Activated CD8-positive, alpha-beta T cell treated with anti-CD3 and anti-CD28 coated beads for 36 hours (primary cell): ENCODE measurements at regions of chr4 and their contacts with region 1.

Region 1: GRCh38 chr4:182770259-182770995 is 146.8 kb downstream of the DCTD start:
- DNase-seq: no peak
- ATAC-seq: no peak
- H3K4me3 Mint-ChIP-seq: no peak overlapping the region
- H3K27ac Mint-ChIP-seq: no peak overlapping the region
- H3K4me1 Mint-ChIP-seq: no peaks in the 10 kb centered on the region
- H3K27me3 Mint-ChIP-seq: no peaks in the 10 kb centered on the region
- CTCF ChIP-seq: no peak

Region 2: GRCh38 chr4:182711211-182711610 is 59.2 kb before region 1 on chr4:
- CTCF ChIA-PET with region 1: no interaction called
- POLR2A ChIA-PET with region 1: no interaction called
- intact Hi-C with region 1: loop called (anchors 2 kb)
- DNase-seq: no peak
- ATAC-seq: no peak
- H3K4me3 Mint-ChIP-seq: no peak overlapping the region
- H3K27ac Mint-ChIP-seq: no peak overlapping the region
- H3K4me1 Mint-ChIP-seq: no peaks in the 10 kb centered on the region
- H3K27me3 Mint-ChIP-seq: peaks cover 5% of the 10 kb centered on the region
- CTCF ChIP-seq: no peak

Region 3: DNA sequence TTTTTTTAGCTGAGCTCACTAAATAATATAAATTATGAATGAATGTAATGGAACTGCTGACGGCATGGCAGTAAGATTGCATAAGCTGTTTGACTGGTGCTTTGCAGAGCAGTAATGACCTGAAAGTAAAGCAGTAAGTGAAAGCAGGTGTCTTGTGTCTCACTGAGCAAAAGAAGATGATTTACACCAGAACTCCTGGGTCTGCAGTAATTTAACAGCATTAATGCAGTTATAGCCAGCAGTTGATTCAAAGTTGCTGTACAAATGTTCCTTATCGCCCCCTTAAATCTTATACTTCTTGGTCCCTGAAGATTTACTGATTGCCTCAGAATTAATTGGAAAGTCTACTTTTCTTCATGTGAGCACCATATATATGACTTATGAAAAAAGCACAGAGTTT is 40.9 kb before region 1 on chr4:
- CTCF ChIA-PET with region 1: no interaction called
- POLR2A ChIA-PET with region 1: no interaction called
- intact Hi-C with region 1: no loop called
- DNase-seq: no peak
- ATAC-seq: no peak
- H3K4me3 Mint-ChIP-seq: no peak overlapping the region
- H3K27ac Mint-ChIP-seq: no peak overlapping the region
- H3K4me1 Mint-ChIP-seq: no peaks in the 10 kb centered on the region
- H3K27me3 Mint-ChIP-seq: peaks cover 4% of the 10 kb centered on the region
- CTCF ChIP-seq: no peak